ENCODE measurements at regions of chr5 and their contacts with region 1.

Region 1: GRCh38 chr5:671459-672328 is 21.5 kb downstream of the TPPP start:
- DNase-seq: peak; percentile 65
- H3K4me3 ChIP-seq: no peak overlapping the region
- H3K27ac ChIP-seq: no peak overlapping the region
- H3K4me1 ChIP-seq: peaks cover 0 to 24% of the 10 kb centered on the region in 2 donors
- H3K27me3 ChIP-seq: no peaks in the 10 kb centered on the region
- CTCF ChIP-seq: peak; percentile 78 to 91 (median 90)
- POLR2A ChIP-seq: no peak

Region 2: GRCh38 chr5:746258-746761 is 74.6 kb after region 1 on chr5:
- intact Hi-C with region 1: no loop called
- DNase-seq: no peak
- H3K4me3 ChIP-seq: no peak overlapping the region
- H3K27ac ChIP-seq: no peak overlapping the region
- H3K4me1 ChIP-seq: no peaks in the 10 kb centered on the region
- H3K27me3 ChIP-seq: no peaks in the 10 kb centered on the region
- CTCF ChIP-seq: no peak
- POLR2A ChIP-seq: no peak

Region 3: GRCh38 chr5:776792-777711 is 105.4 kb after region 1 on chr5:
- intact Hi-C with region 1: no loop called
- DNase-seq: peak in 1 of 2 donors; percentile 7
- H3K4me3 ChIP-seq: no peak overlapping the region
- H3K27ac ChIP-seq: no peak overlapping the region
- H3K4me1 ChIP-seq: no peaks in the 10 kb centered on the region
- H3K27me3 ChIP-seq: no peaks in the 10 kb centered on the region
- CTCF ChIP-seq: no peak
- POLR2A ChIP-seq: no peak

Region 4: DNA sequence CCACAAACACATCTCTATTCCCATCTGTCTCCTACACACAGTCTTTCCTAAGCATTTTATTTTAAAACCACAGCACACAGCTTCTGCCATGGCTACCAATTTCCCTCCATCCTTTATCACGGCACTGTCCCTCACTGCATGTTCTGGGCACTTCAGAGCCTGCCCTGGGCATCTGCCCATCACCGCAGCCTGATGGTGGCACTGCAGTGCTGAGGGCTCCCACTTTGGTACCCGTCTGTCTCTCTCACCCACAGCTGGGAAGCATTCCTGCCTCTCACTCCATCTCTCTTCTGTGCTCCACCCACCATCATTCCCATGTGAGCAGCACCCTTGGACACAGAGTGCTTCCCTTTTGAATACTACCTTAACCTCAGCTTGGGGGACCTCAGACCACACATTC is 147.4 kb after region 1 on chr5:
- intact Hi-C with region 1: no loop called
- DNase-seq: no peak
- H3K4me3 ChIP-seq: no peak overlapping the region
- H3K27ac ChIP-seq: no peak overlapping the region
- H3K4me1 ChIP-seq: no peaks in the 10 kb centered on the region
- H3K27me3 ChIP-seq: no peaks in the 10 kb centered on the region
- CTCF ChIP-seq: no peak
- POLR2A ChIP-seq: no peak

Region 5: GRCh38 chr5:902129-902916 is 230.6 kb after region 1 on chr5:
- intact Hi-C with region 1: loop called (anchors 10 kb)
- DNase-seq: peak in 1 of 2 donors; percentile 3
- H3K4me3 ChIP-seq: no peak overlapping the region
- H3K27ac ChIP-seq: no peak overlapping the region
- H3K4me1 ChIP-seq: no peaks in the 10 kb centered on the region
- H3K27me3 ChIP-seq: no peaks in the 10 kb centered on the region
- CTCF ChIP-seq: no peak
- POLR2A ChIP-seq: no peak